CD8-positive, alpha-beta T cell (primary cell): ENCODE measurements at regions of chrX and their contacts with region 1.

Region 1: GRCh38 chrX:72121383-72121782 is 10.3 kb downstream of the RTL5 start:
- DNase-seq: peak in 8 of 9 experiments; percentile 30 to 77 (median 54)
- ATAC-seq: peak; percentile 84
- H3K4me3 ChIP-seq: peak overlapping the region in 1 of 2 experiments; percentile 7
- H3K4me3 Mint-ChIP-seq: peak overlapping the region; percentile 47
- H3K27ac ChIP-seq: peak overlapping the region in 1 of 2 experiments; percentile 58
- H3K27ac Mint-ChIP-seq: peak overlapping the region; percentile 77
- H3K4me1 ChIP-seq: peaks cover 17% of the 10 kb centered on the region
- H3K4me1 Mint-ChIP-seq: peaks cover 34% of the 10 kb centered on the region
- H3K27me3 ChIP-seq: no peaks in the 10 kb centered on the region
- H3K27me3 Mint-ChIP-seq: no peaks in the 10 kb centered on the region
- CTCF ChIP-seq: no peak

Region 2: GRCh38 chrX:72094894-72095293 is 26.5 kb before region 1 on chrX:
- CTCF ChIA-PET with region 1: no interaction called
- POLR2A ChIA-PET with region 1: no interaction called
- intact Hi-C with region 1: loop called in 1 of 2 experiments (anchors 1 kb)
- DNase-seq: peak; percentile 42 to 89 (median 67)
- ATAC-seq: peak; percentile 89
- H3K4me3 ChIP-seq: no peak overlapping the region
- H3K4me3 Mint-ChIP-seq: no peak overlapping the region
- H3K27ac ChIP-seq: peak overlapping the region in 1 of 2 experiments; percentile 56
- H3K27ac Mint-ChIP-seq: peak overlapping the region; percentile 64
- H3K4me1 ChIP-seq: peaks cover 2% of the 10 kb centered on the region
- H3K4me1 Mint-ChIP-seq: peaks cover 9% of the 10 kb centered on the region
- H3K27me3 ChIP-seq: no peaks in the 10 kb centered on the region
- H3K27me3 Mint-ChIP-seq: peaks cover 17% of the 10 kb centered on the region
- CTCF ChIP-seq: no peak

Region 3: DNA sequence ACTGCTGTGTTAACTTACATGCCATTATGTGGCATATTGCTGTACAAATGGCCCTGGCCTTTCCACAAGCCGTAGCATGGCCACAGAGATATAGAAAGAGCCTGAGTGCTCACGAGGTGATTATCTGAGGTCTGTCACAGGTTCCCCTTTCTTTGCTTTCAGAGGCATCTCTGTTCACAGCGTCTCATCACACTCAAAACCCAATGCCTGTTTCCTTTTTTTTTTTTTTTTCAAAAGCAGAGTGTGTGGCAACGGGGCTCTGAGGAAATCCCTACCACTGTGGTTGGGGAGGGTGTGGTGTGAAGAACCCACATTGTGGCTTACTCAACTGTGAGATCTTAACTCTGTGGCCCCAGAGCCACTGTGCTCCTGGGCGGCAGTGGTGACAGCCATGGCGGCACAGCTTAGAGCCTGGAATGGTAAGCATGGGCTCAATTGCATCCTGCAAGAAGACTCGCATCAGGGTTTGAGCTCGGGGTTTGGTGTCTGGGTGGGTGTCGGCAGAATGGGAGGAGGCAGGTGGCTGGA is 20.5 kb before region 1 on chrX:
- CTCF ChIA-PET with region 1: interaction called, 3 read pairs
- POLR2A ChIA-PET with region 1: no interaction called
- intact Hi-C with region 1: loop called in 1 of 2 experiments (anchors 2 kb)
- DNase-seq: peak; percentile 44 to 92 (median 72)
- ATAC-seq: peak; percentile 66
- H3K4me3 ChIP-seq: peak overlapping the region in 1 of 2 experiments; percentile 55
- H3K4me3 Mint-ChIP-seq: peak overlapping the region; percentile 79
- H3K27ac ChIP-seq: peak overlapping the region in 1 of 2 experiments; percentile 71
- H3K27ac Mint-ChIP-seq: peak overlapping the region; percentile 79
- H3K4me1 ChIP-seq: peaks cover 40% of the 10 kb centered on the region
- H3K4me1 Mint-ChIP-seq: peaks cover 43% of the 10 kb centered on the region
- H3K27me3 ChIP-seq: no peaks in the 10 kb centered on the region
- H3K27me3 Mint-ChIP-seq: peaks cover 16% of the 10 kb centered on the region
- CTCF ChIP-seq: no peak

Region 4: DNA sequence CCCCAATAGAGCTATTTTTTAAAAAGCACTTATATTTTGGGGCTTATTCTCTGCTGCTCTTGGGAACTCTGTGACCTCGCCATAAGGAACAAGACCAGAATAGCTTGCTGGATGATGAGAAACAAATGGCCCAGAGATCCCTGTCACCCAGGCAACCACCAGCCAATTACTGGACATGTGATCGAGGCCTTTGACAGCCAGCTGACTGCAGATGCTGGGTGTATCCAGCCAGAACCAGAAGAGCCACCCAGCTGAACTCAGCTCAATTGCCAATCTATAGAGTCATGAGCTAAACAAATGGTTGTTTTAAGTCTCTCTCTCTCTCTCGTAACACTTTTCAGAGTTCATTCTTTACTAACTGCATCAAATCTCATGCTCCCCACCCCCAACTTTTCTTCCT is 208.7 kb after region 1 on chrX:
- CTCF ChIA-PET with region 1: no interaction called
- POLR2A ChIA-PET with region 1: no interaction called
- intact Hi-C with region 1: no loop called
- DNase-seq: no peak
- ATAC-seq: no peak
- H3K4me3 ChIP-seq: no peak overlapping the region
- H3K4me3 Mint-ChIP-seq: no peak overlapping the region
- H3K27ac ChIP-seq: no peak overlapping the region
- H3K27ac Mint-ChIP-seq: no peak overlapping the region
- H3K4me1 ChIP-seq: no peaks in the 10 kb centered on the region
- H3K4me1 Mint-ChIP-seq: peaks cover 5% of the 10 kb centered on the region
- H3K27me3 ChIP-seq: no peaks in the 10 kb centered on the region
- H3K27me3 Mint-ChIP-seq: no peaks in the 10 kb centered on the region
- CTCF ChIP-seq: no peak